Activated CD4-positive, alpha-beta memory T cell treated with anti-CD3 and anti-CD28 coated beads for 36 hours (primary cell): ENCODE measurements at regions of chr15 and their contacts with region 1.

Region 1: GRCh38 chr15:72312605-72313447 is 7.1 kb downstream of the CELF6 start:
- DNase-seq: peak; percentile 72
- H3K4me3 Mint-ChIP-seq: no peak overlapping the region
- H3K27ac Mint-ChIP-seq: no peak overlapping the region
- H3K4me1 Mint-ChIP-seq: peaks cover 3% of the 10 kb centered on the region
- H3K27me3 Mint-ChIP-seq: no peaks in the 10 kb centered on the region

Region 2: GRCh38 chr15:72272213-72273002 is 40.4 kb before region 1 on chr15 and contains the start of gene PARP6:
- CTCF ChIA-PET with region 1: interaction called, 13 read pairs
- POLR2A ChIA-PET with region 1: no interaction called
- intact Hi-C with region 1: no loop called
- DNase-seq: peak; percentile 99
- H3K4me3 Mint-ChIP-seq: peak within 1 kb of the TSS; percentile 84
- H3K27ac Mint-ChIP-seq: peak within 1 kb of the TSS; percentile 89
- H3K4me1 Mint-ChIP-seq: peaks cover 33% of the 10 kb centered on the region
- H3K27me3 Mint-ChIP-seq: no peaks in the 10 kb centered on the region
- total RNA-seq, gene PARP6: 42.8 to 44.5 TPM

Region 3: DNA sequence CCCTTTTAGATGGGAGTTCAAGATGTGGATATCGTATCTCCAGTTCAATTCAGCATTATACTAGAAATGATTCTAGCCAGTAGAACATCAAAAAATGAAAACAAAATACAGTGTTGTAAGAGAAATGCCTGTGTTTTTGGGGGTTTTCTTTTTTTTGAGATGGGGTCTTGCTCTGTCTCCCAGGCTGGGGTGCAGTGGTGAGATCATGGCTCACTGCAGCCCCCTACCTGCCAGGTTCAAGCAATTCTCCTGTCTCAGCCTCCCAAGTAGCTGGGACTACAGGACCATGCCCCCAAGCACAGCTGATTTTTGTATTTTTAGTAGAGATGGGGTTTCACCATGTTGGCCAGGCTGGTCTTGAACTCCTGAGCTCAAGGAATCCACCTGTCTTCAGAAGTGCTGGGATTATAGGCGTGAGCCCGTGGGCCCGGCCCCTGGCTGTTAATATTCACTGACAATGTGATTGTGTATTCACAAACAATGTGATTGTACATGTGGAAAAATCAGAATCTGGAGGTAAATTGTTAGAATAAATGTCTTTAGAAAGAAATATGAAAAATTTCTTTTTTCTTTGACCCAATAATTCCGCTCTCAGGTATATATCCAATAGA is 220.3 kb after region 1 on chr15:
- CTCF ChIA-PET with region 1: interaction called, 10 read pairs
- POLR2A ChIA-PET with region 1: no interaction called
- intact Hi-C with region 1: no loop called
- DNase-seq: peak; percentile 40
- H3K4me3 Mint-ChIP-seq: no peak overlapping the region
- H3K27ac Mint-ChIP-seq: no peak overlapping the region
- H3K4me1 Mint-ChIP-seq: peaks cover 37% of the 10 kb centered on the region
- H3K27me3 Mint-ChIP-seq: no peaks in the 10 kb centered on the region

Region 4: DNA sequence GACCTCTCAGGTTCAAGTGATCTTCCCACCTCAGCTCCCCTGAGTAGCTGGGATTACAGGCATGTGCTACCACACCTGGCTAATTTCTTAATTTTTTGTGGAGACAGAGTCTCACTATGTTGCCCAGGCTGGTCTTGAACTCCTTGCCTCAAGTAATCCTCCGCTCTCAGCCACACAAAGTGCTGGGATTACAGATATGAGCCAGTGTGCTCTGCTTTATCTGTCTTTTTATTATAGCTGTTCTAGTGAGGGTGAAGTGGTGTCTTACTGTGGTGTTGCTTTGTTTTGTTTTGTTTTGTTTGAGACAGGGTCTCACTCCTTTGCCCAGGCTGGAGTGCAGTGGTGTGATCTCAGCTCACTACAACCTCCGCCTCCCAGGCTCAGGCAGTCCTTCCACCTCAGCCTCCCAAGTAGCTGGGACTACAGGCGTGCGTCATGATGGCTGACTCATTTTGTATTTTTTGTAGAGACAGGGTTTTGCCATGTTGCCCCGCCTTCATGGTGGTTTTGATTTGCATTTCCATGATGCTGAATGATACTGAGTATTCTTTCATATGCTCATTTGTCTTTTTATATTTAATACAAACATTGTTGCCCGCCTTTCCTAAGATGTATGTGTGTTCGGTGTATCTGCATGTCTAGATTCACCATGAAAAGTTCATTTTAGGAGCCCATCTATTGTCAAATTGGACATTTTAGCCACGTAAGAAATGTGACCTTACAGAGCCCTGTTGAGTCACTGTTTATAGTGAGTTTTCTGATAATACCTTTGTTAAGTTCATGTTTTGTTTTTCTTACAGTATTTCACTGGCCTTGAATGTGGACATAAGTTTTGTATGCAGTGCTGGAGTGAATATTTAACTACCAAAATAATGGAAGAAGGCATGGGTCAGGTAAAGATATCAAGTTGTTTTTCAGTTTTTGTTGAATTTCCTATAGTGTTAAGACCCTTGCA is 241.9 kb after region 1 on chr15:
- CTCF ChIA-PET with region 1: interaction called, 10 read pairs
- POLR2A ChIA-PET with region 1: no interaction called
- intact Hi-C with region 1: no loop called
- DNase-seq: peak; percentile 74
- H3K4me3 Mint-ChIP-seq: no peak overlapping the region
- H3K27ac Mint-ChIP-seq: peak overlapping the region; percentile 76
- H3K4me1 Mint-ChIP-seq: peaks cover 28% of the 10 kb centered on the region
- H3K27me3 Mint-ChIP-seq: no peaks in the 10 kb centered on the region

Region 5: DNA sequence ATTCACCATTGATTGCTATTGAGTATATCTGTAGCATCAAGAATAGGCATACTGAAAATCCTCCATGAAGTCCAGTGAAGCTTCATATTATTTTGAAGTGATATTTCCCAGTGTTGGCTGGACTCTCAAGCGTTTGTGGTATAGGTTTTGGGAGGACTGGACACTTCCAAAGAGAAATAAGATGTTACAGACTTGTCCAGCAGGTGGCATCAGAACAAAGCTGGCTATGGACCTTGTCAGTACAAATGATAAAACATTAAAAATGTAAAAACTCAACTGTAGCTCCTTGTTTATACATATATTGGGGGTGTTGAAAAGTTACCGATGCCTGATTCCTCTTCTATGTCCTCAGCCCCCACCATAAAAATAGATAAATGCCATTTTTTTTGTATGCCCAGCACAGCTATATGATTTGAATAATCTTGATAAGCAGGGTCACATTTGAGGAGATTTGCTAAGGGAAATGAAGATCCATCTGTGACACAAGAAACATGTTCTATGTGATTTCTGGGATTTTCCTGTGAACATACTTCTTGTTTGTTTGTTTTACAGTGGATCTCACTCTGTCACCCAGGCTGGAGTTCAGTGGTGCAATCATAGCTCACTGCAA is 287.1 kb after region 1 on chr15:
- CTCF ChIA-PET with region 1: interaction called, 16 read pairs
- POLR2A ChIA-PET with region 1: no interaction called
- intact Hi-C with region 1: no loop called
- DNase-seq: peak; percentile 21
- H3K4me3 Mint-ChIP-seq: no peak overlapping the region
- H3K27ac Mint-ChIP-seq: no peak overlapping the region
- H3K4me1 Mint-ChIP-seq: no peaks in the 10 kb centered on the region
- H3K27me3 Mint-ChIP-seq: no peaks in the 10 kb centered on the region

Region 6: DNA sequence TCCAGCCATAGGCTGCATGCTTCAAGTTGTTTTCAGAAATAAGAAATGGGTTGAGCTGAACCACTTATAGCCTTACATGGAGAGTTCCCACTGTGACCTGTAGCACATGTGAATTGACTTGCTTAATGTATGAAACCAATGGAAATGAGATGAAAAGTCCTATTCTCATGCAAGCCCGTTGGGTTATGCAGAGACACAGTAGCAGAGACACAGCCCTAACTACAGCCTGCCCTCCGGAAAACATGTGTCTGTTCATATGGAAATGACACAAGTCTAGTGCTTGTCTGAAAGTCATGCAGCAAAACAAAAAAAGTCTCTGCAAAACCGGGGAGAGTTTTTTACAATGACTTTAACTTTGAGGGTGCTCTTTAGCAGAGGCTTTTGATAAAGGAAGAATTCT is 358.7 kb after region 1 on chr15:
- CTCF ChIA-PET with region 1: interaction called, 18 read pairs
- POLR2A ChIA-PET with region 1: no interaction called
- intact Hi-C with region 1: loop called (anchors 5 kb)
- DNase-seq: no peak
- H3K4me3 Mint-ChIP-seq: no peak overlapping the region
- H3K27ac Mint-ChIP-seq: no peak overlapping the region
- H3K4me1 Mint-ChIP-seq: peaks cover 4% of the 10 kb centered on the region
- H3K27me3 Mint-ChIP-seq: peaks cover 12% of the 10 kb centered on the region

Region 7: DNA sequence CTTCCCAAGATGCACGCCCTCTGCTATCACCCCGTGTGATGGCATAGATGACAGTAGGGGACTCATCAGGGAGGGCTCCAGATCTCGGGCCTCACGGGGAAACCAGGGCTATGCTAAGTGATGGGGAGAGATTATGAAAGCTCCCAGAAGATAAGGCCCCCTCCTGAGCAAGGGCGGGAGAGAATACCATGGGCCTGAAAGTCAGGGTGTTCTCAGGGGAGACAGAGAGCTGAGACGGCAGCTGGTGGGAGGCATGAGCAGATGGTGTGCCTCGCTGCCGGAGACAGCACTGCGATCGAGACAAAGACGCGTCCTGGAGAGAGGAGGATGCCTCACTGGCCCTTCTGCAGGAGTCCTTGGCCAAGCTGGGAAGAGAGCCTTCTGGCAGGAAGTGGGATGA is 577.2 kb after region 1 on chr15:
- CTCF ChIA-PET with region 1: no interaction called
- POLR2A ChIA-PET with region 1: no interaction called
- intact Hi-C with region 1: no loop called
- DNase-seq: no peak
- H3K4me3 Mint-ChIP-seq: no peak overlapping the region
- H3K27ac Mint-ChIP-seq: no peak overlapping the region
- H3K4me1 Mint-ChIP-seq: no peaks in the 10 kb centered on the region
- H3K27me3 Mint-ChIP-seq: peaks cover 6% of the 10 kb centered on the region